HepG2 (cell line): ENCODE measurements at regions of chr1 and their contacts with region 1.

Region 1: GRCh38 chr1:31182352-31182751 is 57.3 kb downstream of the NKAIN1 start:
- DNase-seq: peak; percentile 33
- ATAC-seq: peak; percentile 87
- H3K4me3 ChIP-seq: peak overlapping the region in 2 of 3 experiments; percentile 34 to 69; a peak in 3 of 6 replicates
- H3K27ac ChIP-seq: no peak overlapping the region
- H3K4me1 ChIP-seq: peaks cover 14% of the 10 kb centered on the region
- H3K27me3 ChIP-seq: peaks cover 1 to 13% of the 10 kb centered on the region in 2 experiments; a peak in 1 of 5 replicates
- CTCF ChIP-seq: peak; percentile 34
- EP300 ChIP-seq: no peak
- POLR2A ChIP-seq: no peak
- RAD21 ChIP-seq: no peak

Region 2: DNA sequence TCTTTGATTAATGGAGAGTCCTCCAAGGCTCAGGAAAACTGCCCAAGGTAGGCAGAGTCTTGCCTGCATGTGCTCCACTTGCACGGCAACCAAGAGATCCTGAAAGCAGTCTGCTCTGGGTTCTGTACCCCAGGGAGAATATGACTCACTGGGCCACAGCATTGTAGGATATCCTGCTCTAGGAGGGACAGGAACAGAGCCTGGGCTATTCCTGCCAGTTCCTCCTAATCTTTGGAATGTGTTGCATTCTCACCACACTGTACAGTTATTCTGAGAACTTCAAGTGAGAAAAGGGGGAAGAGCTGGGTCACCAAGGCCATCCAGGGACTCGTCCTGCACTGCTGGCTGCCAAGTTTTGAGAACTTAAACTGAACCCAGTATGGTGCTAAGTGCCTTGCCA is 737.5 kb before region 1 on chr1:
- CTCF ChIA-PET with region 1: no interaction called
- POLR2A ChIA-PET with region 1: no interaction called
- in situ Hi-C with region 1: no loop called
- intact Hi-C with region 1: no loop called
- DNase-seq: no peak
- ATAC-seq: no peak
- H3K4me3 ChIP-seq: no peak overlapping the region
- H3K27ac ChIP-seq: no peak overlapping the region
- H3K4me1 ChIP-seq: no peaks in the 10 kb centered on the region
- H3K27me3 ChIP-seq: no peaks in the 10 kb centered on the region
- CTCF ChIP-seq: no peak
- EP300 ChIP-seq: no peak
- POLR2A ChIP-seq: no peak
- RAD21 ChIP-seq: no peak

Region 3: GRCh38 chr1:31163866-31164265 is 18.5 kb before region 1 on chr1:
- CTCF ChIA-PET with region 1: interaction called, 8 read pairs
- POLR2A ChIA-PET with region 1: no interaction called
- in situ Hi-C with region 1: no loop called
- intact Hi-C with region 1: loop called (anchors 2 kb)
- DNase-seq: no peak
- ATAC-seq: no peak
- H3K4me3 ChIP-seq: no peak overlapping the region
- H3K27ac ChIP-seq: no peak overlapping the region
- H3K4me1 ChIP-seq: peaks cover 62% of the 10 kb centered on the region
- H3K27me3 ChIP-seq: no peaks in the 10 kb centered on the region
- CTCF ChIP-seq: no peak
- EP300 ChIP-seq: no peak
- POLR2A ChIP-seq: no peak
- RAD21 ChIP-seq: no peak

Region 4: DNA sequence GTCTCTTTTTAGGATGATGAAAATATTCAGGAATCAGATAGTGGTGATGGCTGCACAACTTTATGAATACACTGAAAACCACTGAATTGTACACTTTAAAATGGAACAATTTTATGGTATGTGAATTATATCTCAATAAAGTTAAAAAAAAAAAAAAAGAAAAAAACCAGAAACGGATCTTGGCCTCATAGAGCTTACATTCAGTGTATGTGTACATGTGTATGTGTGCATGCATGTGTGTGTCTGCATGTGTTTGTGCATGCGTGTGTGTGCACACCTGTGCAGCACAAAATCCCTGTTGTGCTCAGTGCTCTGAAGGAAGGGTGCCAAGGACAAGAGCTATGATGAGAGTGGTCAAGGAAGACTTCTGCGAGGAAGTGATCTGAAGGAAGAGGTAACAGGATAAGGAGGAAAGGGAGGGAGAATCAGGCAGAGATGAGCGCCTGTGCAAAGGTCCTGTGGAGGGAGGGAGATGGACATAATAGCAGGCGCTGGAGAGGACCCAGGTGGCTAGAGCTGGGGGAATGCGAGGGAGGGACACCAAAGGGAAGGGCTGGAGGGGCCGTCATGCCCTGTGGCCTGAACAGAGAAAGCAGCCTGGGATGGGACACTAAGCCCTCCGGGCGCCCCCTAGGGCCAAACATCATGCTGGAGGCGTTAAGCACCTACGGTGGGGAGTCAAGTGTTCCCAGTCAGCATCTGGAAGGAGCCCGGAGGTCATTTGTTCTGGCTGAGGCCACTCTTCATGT is 32.1 kb after region 1 on chr1:
- CTCF ChIA-PET with region 1: no interaction called
- POLR2A ChIA-PET with region 1: no interaction called
- in situ Hi-C with region 1: no loop called
- intact Hi-C with region 1: loop called (anchors 1 kb)
- DNase-seq: peak; percentile 26
- ATAC-seq: peak; percentile 88
- H3K4me3 ChIP-seq: no peak overlapping the region
- H3K27ac ChIP-seq: no peak overlapping the region
- H3K4me1 ChIP-seq: peaks cover 9% of the 10 kb centered on the region
- H3K27me3 ChIP-seq: peaks cover 0 to 18% of the 10 kb centered on the region in 2 experiments; a peak in 1 of 5 replicates
- CTCF ChIP-seq: peak; percentile 57
- EP300 ChIP-seq: no peak
- POLR2A ChIP-seq: no peak
- RAD21 ChIP-seq: no peak

Region 5: DNA sequence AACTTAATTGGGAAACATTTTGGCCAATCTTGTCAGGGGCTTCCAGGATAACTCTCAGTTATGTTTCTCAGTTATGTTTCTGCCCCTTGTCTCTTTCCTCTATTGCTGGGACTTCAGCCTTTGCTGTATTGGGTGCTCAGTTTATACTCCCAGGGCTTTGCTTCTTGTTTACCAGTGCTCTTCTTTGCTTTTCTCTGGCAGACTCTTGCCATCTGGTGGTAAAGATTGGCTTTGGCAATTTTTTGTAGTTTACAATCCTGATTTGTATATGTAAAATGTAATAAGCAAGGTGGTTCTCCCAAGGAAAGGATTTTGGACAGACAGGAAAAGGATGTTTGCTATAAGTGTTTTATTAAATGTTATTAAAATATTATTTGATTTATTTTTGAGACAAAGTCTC is 152.7 kb after region 1 on chr1:
- CTCF ChIA-PET with region 1: interaction called, 30 read pairs
- POLR2A ChIA-PET with region 1: no interaction called
- in situ Hi-C with region 1: no loop called
- intact Hi-C with region 1: no loop called
- DNase-seq: peak; percentile 50
- ATAC-seq: peak; percentile 63; the same call in 2 of the 3 replicates
- H3K4me3 ChIP-seq: no peak overlapping the region
- H3K27ac ChIP-seq: no peak overlapping the region
- H3K4me1 ChIP-seq: no peaks in the 10 kb centered on the region
- H3K27me3 ChIP-seq: no peaks in the 10 kb centered on the region
- CTCF ChIP-seq: peak; percentile 61
- EP300 ChIP-seq: no peak
- POLR2A ChIP-seq: no peak
- RAD21 ChIP-seq: peak; percentile 38; the same call in 1 of the 2 replicates

Region 6: DNA sequence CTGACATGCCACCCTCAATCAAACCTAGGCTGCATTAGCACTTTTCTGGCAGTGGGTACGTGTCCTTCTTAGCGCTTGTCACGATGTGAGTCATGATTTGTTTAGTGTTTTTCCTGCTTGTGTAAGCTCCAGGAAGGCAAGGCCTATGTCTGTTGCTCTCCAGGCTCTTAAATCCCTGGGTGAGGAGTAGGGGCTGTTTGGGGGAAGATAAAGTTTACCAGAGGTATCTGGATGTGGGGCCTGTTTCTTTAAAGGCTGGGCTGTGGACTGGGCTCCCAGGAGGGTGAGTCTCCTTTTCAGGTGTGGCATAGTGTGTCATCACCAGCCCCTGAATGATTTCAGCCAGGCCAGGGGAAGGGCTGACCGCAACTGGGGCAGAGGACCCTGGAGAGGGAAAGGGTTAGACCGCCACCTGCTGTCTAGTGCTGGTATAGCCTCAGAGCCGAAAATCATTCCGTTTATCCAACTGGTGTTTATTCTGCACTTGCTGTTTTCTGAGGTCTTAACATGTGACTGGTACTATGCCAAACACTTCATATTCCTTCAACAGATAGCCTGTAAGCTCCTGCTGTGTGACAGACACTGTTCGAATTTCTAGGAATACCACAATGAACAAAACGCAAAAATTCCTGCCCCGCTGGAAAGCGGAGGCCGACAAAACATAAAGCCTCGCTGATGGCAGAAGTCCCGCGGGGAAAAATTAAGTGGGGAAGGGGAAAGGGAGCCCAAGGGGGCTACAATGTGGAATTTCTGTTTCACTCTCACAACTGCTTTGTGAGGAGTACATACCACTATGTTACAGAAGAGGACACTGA is 240.4 kb after region 1 on chr1:
- CTCF ChIA-PET with region 1: interaction called, 4 read pairs
- POLR2A ChIA-PET with region 1: no interaction called
- in situ Hi-C with region 1: loop called (anchors 10 kb)
- intact Hi-C with region 1: no loop called
- DNase-seq: peak; percentile 70
- ATAC-seq: peak; percentile 87
- H3K4me3 ChIP-seq: no peak overlapping the region
- H3K27ac ChIP-seq: peak overlapping the region; percentile 62
- H3K4me1 ChIP-seq: peaks cover 72% of the 10 kb centered on the region
- H3K27me3 ChIP-seq: no peaks in the 10 kb centered on the region
- CTCF ChIP-seq: peak; percentile 94
- EP300 ChIP-seq: 0 out of 4 replicates have a peak, but pooled peaks of 1 of the 2 experiments have one; percentile 6
- POLR2A ChIP-seq: no peak
- RAD21 ChIP-seq: peak; percentile 94